ENCODE measurements at regions of chr1 and their contacts with region 1.

Region 1: GRCh38 chr1:51768971-51769588 is 109.4 kb downstream of the NRDC start:
- DNase-seq: no peak

Region 2: DNA sequence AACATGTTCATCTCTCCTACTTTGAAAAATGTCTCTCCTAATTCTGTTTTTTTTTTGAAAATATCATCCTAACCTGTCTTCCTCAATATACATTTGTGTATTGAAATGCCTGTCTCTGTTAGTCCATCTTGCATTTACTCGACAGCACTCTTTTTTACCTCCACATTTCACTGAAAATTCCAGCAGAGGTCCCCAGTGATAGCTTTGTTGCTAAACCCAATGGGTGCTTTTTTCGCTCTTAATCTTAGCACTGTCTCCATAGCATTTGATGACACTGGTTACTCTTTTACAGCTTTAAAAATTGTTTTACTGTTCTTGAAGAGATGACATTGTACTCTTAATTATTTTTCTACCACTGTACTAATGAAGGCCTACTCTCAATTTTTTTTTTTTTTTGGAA is 141.4 kb before region 1 on chr1:
- intact Hi-C with region 1: loop called (anchors 1 kb)
- DNase-seq: no peak